Endothelial cell of umbilical vein (primary cell): ENCODE measurements at regions of chr9 and their contacts with region 1.

Region 1: DNA sequence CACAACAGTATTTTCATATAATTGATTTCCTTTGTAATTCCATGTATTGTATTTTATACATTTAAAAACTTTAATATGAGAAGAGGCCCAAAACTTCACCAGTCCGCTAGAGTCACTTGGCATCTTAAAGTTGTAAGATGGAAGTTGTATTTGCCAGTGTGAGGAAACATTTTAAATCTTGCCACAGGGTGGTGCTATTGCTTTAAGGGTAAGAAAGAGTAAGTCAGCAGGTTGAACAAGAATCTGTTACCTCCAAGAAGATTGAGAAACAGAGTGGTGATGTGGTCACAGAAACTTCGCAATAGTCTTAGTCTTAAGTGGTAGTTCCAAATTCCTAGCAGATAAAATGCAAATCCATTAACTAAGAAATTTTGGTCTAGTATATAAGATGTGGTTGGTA is 39.8 kb upstream of the RANBP6 start:
- DNase-seq: peak; percentile 91
- H3K4me3 ChIP-seq: no peak overlapping the region
- H3K27ac ChIP-seq: no peak overlapping the region
- H3K4me1 ChIP-seq: no peaks in the 10 kb centered on the region
- H3K27me3 ChIP-seq: no peaks in the 10 kb centered on the region
- CTCF ChIP-seq: peak; percentile 37
- POLR2A ChIP-seq: no peak

Region 2: GRCh38 chr9:5799314-5799713 is 255.9 kb before region 1 on chr9:
- CTCF ChIA-PET with region 1: interaction called, 110 read pairs
- POLR2A ChIA-PET with region 1: no interaction called
- dilution Hi-C with region 1: no loop called
- intact Hi-C with region 1: loop called (anchors 1 kb)
- DNase-seq: peak; percentile 82
- H3K4me3 ChIP-seq: no peak overlapping the region
- H3K27ac ChIP-seq: no peak overlapping the region
- H3K4me1 ChIP-seq: peaks cover 2% of the 10 kb centered on the region
- H3K27me3 ChIP-seq: no peaks in the 10 kb centered on the region
- CTCF ChIP-seq: peak; percentile 61 to 71
- POLR2A ChIP-seq: no peak

Region 3: DNA sequence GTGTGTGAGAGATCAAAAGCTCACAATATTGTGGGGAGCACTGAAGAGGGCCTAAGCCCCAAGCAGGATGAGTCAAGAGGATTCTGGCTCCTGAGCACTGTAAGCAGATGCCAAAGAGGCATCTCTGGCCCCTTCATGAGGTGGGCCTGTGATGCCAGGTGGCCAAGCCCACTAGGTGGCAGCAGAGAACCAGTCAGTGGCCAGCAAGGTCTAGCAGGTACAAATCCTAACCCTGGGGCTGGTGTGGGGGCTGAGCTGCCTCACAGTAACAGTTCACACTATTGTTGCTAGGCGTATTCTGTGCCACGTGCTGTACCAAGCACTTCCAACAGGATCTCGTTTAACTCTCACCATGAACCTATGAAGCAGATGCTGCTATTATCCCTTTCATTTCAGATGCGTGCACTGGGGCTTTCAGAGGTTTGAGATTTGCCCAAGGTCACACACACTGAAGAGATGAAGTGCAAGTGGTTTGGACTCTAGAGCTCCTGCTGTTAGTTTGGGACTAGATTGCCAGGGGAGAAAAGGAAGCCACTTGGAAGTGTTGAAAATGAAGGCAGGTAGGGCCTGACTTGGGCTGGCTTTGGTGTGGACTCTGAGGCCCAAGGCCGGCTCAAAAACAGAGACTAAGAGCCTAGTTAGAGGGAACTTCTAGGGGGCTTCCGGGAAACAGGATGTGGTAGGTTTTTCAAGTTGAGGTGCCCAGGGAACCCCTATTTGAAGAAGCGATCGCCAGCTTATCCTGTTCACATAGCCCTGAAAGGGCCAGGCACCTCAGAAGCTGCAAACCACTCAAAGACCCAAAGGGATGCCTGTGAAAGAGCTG is 168.9 kb before region 1 on chr9:
- CTCF ChIA-PET with region 1: interaction called, 192 read pairs
- POLR2A ChIA-PET with region 1: no interaction called
- dilution Hi-C with region 1: no loop called
- intact Hi-C with region 1: loop called (anchors 1 kb)
- DNase-seq: peak; percentile 70
- H3K4me3 ChIP-seq: no peak overlapping the region
- H3K27ac ChIP-seq: no peak overlapping the region
- H3K4me1 ChIP-seq: no peaks in the 10 kb centered on the region
- H3K27me3 ChIP-seq: peaks cover 3 to 4% of the 10 kb centered on the region in 2 experiments
- CTCF ChIP-seq: peak; percentile 91 to 97
- POLR2A ChIP-seq: no peak

Region 4: GRCh38 chr9:6029604-6030274 is 25.5 kb before region 1 on chr9:
- CTCF ChIA-PET with region 1: interaction called, 19 read pairs
- POLR2A ChIA-PET with region 1: no interaction called
- dilution Hi-C with region 1: no loop called
- intact Hi-C with region 1: no loop called
- DNase-seq: no peak
- H3K4me3 ChIP-seq: no peak overlapping the region
- H3K27ac ChIP-seq: no peak overlapping the region
- H3K4me1 ChIP-seq: no peaks in the 10 kb centered on the region
- H3K27me3 ChIP-seq: peaks cover 8 to 24% of the 10 kb centered on the region in 2 experiments
- CTCF ChIP-seq: no peak
- POLR2A ChIP-seq: no peak

Region 5: GRCh38 chr9:6184749-6185645 is 129.8 kb after region 1 on chr9:
- CTCF ChIA-PET with region 1: interaction called, 14 read pairs
- POLR2A ChIA-PET with region 1: no interaction called
- dilution Hi-C with region 1: no loop called
- intact Hi-C with region 1: no loop called
- DNase-seq: peak; percentile 63
- H3K4me3 ChIP-seq: no peak overlapping the region
- H3K27ac ChIP-seq: no peak overlapping the region
- H3K4me1 ChIP-seq: peaks cover 15% of the 10 kb centered on the region
- H3K27me3 ChIP-seq: no peaks in the 10 kb centered on the region
- CTCF ChIP-seq: no peak
- POLR2A ChIP-seq: no peak

Region 6: GRCh38 chr9:6348766-6349165 is 293.6 kb after region 1 on chr9:
- CTCF ChIA-PET with region 1: interaction called, 12 read pairs
- POLR2A ChIA-PET with region 1: no interaction called
- dilution Hi-C with region 1: no loop called
- intact Hi-C with region 1: no loop called
- DNase-seq: no peak
- H3K4me3 ChIP-seq: no peak overlapping the region
- H3K27ac ChIP-seq: no peak overlapping the region
- H3K4me1 ChIP-seq: no peaks in the 10 kb centered on the region
- H3K27me3 ChIP-seq: no peaks in the 10 kb centered on the region
- CTCF ChIP-seq: no peak
- POLR2A ChIP-seq: no peak

Region 7: GRCh38 chr9:6739218-6739617 is 684.0 kb after region 1 on chr9:
- CTCF ChIA-PET with region 1: interaction called, 11 read pairs
- POLR2A ChIA-PET with region 1: no interaction called
- dilution Hi-C with region 1: no loop called
- intact Hi-C with region 1: no loop called
- DNase-seq: peak; percentile 28
- H3K4me3 ChIP-seq: no peak overlapping the region
- H3K27ac ChIP-seq: no peak overlapping the region
- H3K4me1 ChIP-seq: no peaks in the 10 kb centered on the region
- H3K27me3 ChIP-seq: no peaks in the 10 kb centered on the region
- CTCF ChIP-seq: peak; percentile 16 to 25
- POLR2A ChIP-seq: no peak

Region 8: GRCh38 chr9:6973762-6974161 is 918.5 kb after region 1 on chr9:
- CTCF ChIA-PET with region 1: no interaction called
- POLR2A ChIA-PET with region 1: no interaction called
- dilution Hi-C with region 1: no loop called
- intact Hi-C with region 1: no loop called
- DNase-seq: no peak
- H3K4me3 ChIP-seq: no peak overlapping the region
- H3K27ac ChIP-seq: no peak overlapping the region
- H3K4me1 ChIP-seq: no peaks in the 10 kb centered on the region
- H3K27me3 ChIP-seq: no peaks in the 10 kb centered on the region
- CTCF ChIP-seq: no peak
- POLR2A ChIP-seq: no peak